Left ventricle myocardium inferior (tissue), 1 donor: ENCODE measurements at regions of chr6 and their contacts with region 1.

Region 1: GRCh38 chr6:142112451-142113061 is 20.2 kb upstream of the GJE1 start:
- DNase-seq: peak; percentile 27
- H3K4me3 ChIP-seq: no peak overlapping the region
- H3K27ac ChIP-seq: no peak overlapping the region
- H3K4me1 ChIP-seq: no peaks in the 10 kb centered on the region
- H3K27me3 ChIP-seq: no peaks in the 10 kb centered on the region
- CTCF ChIP-seq: peak; percentile 73

Region 2: DNA sequence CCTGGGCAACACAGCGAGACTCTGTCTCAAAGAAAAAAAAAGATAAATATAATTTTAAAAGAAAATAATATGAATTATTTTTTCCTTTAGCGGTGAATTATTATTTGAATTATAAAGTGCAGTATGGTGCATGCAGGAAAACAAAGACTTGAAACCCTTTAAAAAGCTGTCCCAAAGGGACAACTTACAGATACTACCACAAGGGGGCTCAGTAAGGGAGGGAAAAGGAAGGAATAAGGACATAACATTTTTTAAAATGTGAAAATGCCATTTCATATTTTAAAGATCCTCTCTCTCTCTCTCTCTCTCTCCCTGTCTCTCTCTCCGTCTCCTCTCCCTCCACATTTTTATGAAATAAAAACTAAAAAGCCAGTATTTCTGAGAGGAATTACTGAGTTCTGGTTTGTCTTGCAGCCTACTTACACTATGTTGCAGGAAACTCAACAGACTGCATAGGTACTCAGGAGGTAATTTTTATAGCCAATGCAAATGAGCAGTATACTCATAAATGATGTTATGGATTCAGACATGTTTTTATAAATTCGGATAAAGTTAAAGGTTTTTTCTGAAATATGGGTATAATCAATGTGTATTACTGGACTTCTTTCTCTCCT is 434.9 kb before region 1 on chr6:
- intact Hi-C with region 1: loop called (anchors 10 kb)
- DNase-seq: no peak
- H3K4me3 ChIP-seq: no peak overlapping the region
- H3K27ac ChIP-seq: no peak overlapping the region
- H3K4me1 ChIP-seq: peaks cover 4% of the 10 kb centered on the region
- H3K27me3 ChIP-seq: no peaks in the 10 kb centered on the region
- CTCF ChIP-seq: peak; percentile 62